Thyroid gland (tissue), 4 donors: ENCODE measurements at regions of chr16 and their contacts with region 1.

Region 1: DNA sequence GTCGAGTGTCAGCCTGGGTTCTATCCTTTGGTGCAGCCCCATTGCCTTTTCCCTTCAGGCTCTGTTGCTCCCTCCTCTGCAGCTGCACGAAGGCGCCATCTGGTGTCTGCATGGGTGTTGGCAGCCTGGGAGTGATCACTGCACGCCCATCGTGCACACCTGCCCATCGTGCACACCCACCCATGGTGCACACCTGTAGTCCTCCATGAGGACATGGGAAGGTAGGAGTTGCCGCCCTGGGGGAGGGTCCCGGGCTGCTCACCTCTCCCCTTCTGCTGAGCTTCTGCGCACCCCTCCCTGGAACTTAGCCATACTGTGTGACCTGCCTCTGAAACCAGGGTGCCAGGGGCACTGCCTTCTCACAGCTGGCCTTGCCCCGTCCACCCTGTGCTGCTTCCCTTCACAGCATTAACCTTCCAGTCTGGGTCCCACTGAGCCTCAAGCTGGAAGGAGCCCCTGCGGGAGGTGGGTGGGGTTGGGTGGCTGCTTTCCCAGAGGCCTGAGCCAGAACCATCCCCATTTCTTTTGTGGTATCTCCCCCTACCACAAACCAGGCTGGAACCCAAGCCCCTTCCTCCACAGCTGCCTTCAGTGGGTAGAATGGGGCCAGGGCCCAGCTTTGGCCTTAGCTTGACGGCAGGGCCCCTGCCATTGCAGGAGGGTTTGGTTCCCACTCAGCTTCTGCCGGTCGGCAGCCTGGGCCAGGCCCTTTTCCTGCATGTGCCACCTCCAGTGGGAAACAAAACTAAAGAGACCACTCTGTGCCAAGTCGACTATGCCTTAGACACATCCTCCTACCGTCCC is 2.9 kb downstream of the CTRL start:
- DNase-seq: peak; percentile 71 to 78
- H3K4me3 ChIP-seq: no peak overlapping the region
- H3K27ac ChIP-seq: no peak overlapping the region
- H3K4me1 ChIP-seq: peaks cover 9 to 31% of the 10 kb centered on the region in 2 donors
- H3K27me3 ChIP-seq: no peaks in the 10 kb centered on the region
- CTCF ChIP-seq: peak; percentile 34 to 89 (median 86)
- POLR2A ChIP-seq: no peak

Region 2: GRCh38 chr16:67816240-67817031 is 112.3 kb before region 1 on chr16:
- intact Hi-C with region 1: loop called (anchors 5 kb)
- DNase-seq: peak; percentile 79 to 85
- H3K4me3 ChIP-seq: no peak overlapping the region
- H3K27ac ChIP-seq: no peak overlapping the region
- H3K4me1 ChIP-seq: no peaks in the 10 kb centered on the region
- H3K27me3 ChIP-seq: no peaks in the 10 kb centered on the region
- CTCF ChIP-seq: peak; percentile 99 to 100 (median 100)
- POLR2A ChIP-seq: no peak

Region 3: DNA sequence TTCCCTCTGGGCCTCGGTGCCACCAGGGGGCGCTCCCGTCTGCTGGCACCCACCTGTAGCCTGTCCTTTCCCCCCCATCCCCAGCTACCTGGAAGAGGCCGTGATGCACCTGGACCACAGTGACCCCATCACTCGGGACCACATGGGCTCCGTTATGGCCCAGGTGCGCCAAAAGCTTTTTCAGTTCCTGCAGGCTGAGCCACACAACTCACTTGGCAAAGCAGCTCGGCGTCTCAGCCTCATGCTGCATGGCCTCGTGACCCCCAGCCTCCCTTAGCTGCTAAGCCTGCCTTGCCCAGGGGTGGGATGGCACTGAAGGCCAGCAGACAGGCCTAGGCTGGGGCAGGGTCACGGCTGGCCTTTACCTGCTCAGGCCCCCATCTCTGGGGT is 44.9 kb before region 1 on chr16:
- intact Hi-C with region 1: loop called (anchors 5 kb)
- DNase-seq: peak; percentile 73 to 74
- H3K4me3 ChIP-seq: no peak overlapping the region
- H3K27ac ChIP-seq: no peak overlapping the region
- H3K4me1 ChIP-seq: peaks cover 0 to 4% of the 10 kb centered on the region in 2 donors
- H3K27me3 ChIP-seq: no peaks in the 10 kb centered on the region
- CTCF ChIP-seq: peak; percentile 8 to 87 (median 80)
- POLR2A ChIP-seq: no peak

Region 4: DNA sequence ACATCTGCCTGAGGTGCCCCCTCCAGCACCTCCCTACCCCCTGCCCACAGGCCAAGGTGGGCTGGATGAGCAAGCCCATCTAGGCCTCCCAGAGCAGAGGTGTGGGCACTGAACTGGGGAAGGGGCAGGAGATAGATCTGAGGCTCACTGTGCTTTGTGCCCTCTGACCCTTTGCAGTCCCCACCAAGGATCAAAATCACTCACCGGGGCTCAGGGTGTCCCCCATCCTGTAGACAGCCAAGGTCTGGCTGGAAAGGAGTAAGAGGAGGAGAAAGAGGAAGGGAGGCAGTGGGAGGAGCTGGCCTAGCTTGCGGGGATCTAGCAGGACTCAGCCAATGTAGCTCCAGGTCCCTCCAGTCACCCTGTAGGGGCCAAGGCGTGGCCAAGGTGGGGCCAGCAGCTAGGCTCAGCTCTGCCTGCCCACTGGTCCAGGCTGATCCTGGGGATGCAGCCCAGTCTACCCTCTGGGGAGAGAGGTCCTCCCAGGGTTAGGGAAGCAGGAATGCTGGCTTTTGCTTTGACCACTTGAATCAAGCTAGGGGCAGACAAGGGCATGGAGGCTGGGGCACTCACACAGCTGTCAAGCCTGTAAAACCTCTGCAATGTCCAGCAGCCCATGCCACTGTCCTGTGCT is 37.9 kb after region 1 on chr16:
- intact Hi-C with region 1: no loop called
- DNase-seq: peak; percentile 21 to 33
- H3K4me3 ChIP-seq: peak overlapping the region in 1 of 3 donors; percentile 94
- H3K27ac ChIP-seq: peak overlapping the region; percentile 60 to 93 (median 92)
- H3K4me1 ChIP-seq: peaks cover 39 to 56% of the 10 kb centered on the region in 2 donors
- H3K27me3 ChIP-seq: no peaks in the 10 kb centered on the region
- CTCF ChIP-seq: no peak
- POLR2A ChIP-seq: no peak

Region 5: DNA sequence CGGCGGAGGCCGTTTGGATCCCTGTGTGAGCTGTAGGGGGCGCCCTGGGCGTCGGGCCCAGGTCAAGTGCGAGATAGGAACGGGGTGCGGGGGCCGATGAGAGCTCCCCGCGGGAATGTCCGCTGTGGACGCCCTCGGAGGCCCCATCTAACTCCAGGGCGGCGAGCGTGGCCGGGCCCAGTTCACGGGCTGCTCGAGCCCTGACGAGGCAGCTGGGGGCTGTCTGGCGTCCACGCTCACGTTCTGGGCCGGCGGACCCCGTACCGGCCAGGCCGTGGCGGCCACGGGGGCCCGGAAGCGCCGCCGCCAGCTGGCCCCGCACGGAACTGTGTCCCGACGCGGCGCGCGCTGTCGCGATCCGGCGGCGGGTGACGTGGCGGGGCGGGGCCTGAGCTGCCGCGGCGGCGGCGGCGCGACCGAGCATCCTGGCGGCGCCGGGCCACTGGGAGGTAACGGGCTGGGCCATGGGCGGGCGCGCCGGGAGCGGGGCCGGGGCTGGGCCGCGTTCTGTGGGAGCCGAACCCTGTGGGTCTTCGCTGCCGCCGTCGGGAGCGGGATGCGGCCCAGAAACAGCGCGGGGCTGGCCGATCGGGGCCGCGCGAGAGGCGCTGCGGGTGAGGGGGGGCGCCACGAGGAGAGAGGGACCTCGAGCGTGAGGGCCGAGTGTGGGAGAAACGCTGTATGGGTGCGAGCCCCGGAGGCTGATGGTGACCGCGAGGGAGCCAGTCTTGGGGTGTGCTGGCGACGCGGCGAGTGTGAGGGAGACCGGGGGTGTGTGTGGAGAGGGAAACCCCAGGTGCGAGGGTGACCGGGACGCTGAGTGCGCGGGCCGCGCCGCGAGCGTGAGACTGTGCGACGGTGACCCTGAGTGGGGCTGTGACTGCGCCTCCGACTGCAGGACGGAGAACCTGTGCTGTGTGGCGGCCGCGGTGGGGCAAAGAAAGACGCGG is 335.6 kb after region 1 on chr16 and contains the start of gene SLC7A6:
- intact Hi-C with region 1: no loop called
- DNase-seq: peak; percentile 74
- H3K4me3 ChIP-seq: peak within 1 kb of the TSS; percentile 60 to 74 (median 69)
- H3K27ac ChIP-seq: peak within 1 kb of the TSS; percentile 99 to 100 (median 99)
- H3K4me1 ChIP-seq: peaks cover 26 to 57% of the 10 kb centered on the region in 2 donors
- H3K27me3 ChIP-seq: no peaks in the 10 kb centered on the region
- CTCF ChIP-seq: peak in 5 of 6 experiments; percentile 28 to 70 (median 60)
- POLR2A ChIP-seq: peak; percentile 80 to 96
- total RNA-seq, gene SLC7A6: 73.1 to 116 (median 85.7) TPM